A673 (cell line): ENCODE measurements at regions of chr15 and their contacts with region 1.

Region 1: DNA sequence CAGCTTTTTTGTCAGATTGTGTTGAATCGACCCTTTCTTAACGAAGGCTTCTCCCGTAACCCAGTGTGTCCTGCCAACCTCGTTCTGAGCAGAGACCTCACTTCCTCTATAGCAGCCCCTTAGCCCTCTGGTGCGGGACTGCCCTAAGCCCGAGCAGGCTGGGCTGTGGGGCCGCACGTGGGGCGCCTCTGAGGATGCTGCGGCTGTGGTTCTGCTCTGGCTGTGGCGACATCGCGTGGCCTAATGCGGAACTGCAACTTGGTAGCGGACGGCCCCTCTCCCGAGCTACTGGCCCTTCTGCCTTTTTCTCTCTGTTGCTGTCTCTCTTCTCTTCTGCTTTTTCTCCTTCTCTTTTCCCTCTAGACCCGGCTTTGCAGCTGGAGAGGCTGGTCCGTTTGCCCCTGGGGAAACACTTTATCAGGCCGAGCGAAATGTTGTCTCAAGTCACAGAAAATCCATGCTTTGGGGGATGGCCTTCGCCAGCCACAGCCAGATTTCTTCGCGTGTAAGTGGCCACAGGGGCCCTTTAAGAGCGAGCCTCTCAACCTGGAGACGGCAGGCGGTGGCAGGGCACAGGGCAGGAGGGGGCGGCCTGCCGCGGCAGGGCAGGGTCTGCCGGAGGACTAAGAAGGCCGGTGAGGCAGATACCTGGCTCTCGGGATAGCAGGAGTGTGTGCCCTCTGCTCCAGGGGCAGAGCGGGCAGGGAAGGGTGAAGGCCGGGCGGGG is 19.4 kb upstream of the KIF23 start:
- DNase-seq: peak; percentile 85
- H3K4me3 ChIP-seq: no peak overlapping the region
- H3K27ac ChIP-seq: no peak overlapping the region
- H3K4me1 ChIP-seq: peaks cover 11% of the 10 kb centered on the region
- H3K27me3 ChIP-seq: no peaks in the 10 kb centered on the region
- CTCF ChIP-seq: peak; percentile 98

Region 2: DNA sequence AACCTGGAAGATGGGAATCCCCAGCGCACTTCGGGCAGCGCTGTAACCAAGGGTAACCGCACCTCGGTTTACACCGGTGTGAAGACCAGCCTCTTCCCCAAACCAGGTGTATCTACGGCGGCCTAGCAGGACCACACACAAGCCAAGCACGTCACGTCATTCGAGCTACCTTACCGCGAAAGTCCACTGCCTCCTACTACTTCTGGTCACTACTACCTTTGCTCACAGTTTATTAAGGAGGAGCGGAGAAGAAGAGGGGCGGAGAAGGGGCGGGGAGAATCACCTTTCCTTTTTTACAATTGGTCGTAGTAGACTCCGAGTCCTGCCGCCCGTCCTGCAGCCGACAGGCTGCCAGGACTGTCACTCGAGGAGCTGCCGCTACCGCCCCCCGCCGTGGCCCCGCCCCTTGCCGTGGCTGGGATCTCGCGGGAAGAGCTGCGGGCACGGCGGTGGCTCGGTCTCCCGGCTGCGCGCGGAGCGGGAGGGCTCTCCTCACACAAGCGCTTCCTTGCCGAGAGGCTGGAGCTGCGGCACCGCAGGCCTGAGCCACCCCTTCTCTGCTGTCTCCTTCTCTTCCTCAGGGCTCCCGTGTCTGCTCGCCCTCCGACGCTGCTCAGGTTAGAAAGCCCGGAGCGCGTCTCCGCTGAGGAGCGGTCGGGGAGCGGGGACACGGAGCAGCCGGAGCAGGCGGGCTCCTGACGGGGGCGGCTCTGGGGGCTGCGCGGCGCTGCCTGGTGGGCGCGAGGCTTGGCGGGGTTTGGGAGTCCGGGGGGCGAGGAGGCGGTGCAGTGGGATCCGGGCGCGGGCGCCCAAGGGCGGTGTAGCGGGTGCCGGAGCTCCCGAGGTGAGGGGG is 234.4 kb before region 1 on chr15 and contains the start of gene GLCE:
- CTCF ChIA-PET with region 1: no interaction called
- POLR2A ChIA-PET with region 1: no interaction called
- intact Hi-C with region 1: loop called (anchors 5 kb)
- DNase-seq: peak; percentile 98
- H3K4me3 ChIP-seq: peak within 1 kb of the TSS; percentile 96
- H3K27ac ChIP-seq: peak within 1 kb of the TSS; percentile 95
- H3K4me1 ChIP-seq: peaks cover 28% of the 10 kb centered on the region
- H3K27me3 ChIP-seq: no peaks in the 10 kb centered on the region
- CTCF ChIP-seq: no peak
- total RNA-seq, gene GLCE: 41.9 and 44.6 TPM in 2 replicates

Region 3: DNA sequence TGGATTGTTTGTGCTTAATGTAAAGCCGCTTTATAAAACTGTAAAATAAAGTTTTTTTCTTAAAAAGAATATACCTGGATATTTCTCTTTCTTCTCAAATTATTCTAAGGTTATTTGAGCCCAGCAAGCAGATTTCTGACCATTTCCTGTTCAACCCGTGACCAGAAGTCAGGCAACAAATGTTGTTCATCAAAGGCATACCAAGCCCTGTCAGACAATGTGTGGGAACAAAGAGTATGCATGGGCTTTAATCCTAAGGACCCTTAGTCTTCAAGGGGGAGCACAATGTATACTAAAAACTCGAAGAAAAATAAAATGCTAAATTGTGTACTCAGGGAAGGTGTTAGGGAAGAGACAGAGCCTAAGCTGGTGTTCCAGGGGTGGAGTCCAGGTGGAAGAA is 122.6 kb before region 1 on chr15:
- CTCF ChIA-PET with region 1: no interaction called
- POLR2A ChIA-PET with region 1: no interaction called
- intact Hi-C with region 1: loop called (anchors 10 kb)
- DNase-seq: no peak
- H3K4me3 ChIP-seq: no peak overlapping the region
- H3K27ac ChIP-seq: no peak overlapping the region
- H3K4me1 ChIP-seq: peaks cover 28% of the 10 kb centered on the region
- H3K27me3 ChIP-seq: no peaks in the 10 kb centered on the region
- CTCF ChIP-seq: no peak